ENCODE measurements at regions of chr10 and their contacts with region 1.

Region 1: DNA sequence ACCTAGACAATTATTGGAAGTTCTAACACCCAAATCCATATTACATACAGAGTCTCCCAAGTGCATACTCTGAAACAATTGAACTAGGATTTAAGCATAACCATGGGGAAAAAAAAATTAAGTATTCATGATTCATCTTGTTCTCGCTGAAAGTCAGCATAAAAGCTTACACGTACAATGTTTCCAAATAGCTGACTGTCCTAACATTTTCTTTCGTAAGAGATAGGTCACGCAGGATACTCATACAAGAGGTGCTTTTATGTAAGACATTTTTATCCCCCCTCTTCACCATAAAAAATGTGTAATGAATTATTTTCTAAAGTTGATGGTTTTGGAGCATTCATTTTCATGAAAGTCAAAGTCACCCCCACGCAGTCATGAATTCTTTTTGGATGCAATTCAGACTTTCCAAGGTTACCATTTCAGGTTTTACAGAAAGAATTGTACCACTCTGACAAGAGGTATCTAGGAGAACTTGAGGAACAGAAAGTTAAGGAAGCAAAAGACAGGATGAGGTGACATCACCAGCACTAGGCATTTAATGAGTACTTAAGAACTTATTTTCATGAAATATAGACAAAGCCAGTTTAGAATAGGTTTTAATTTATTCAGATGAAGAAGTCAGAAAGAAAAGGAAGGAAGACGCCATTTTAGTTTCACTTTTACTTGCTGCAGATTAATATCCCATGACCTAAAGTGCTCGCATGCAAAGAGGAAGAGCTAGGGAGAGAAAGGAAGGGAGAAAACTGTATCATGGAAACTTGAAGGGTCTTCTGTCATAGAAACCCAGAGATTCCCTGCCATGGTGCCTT is 55.8 kb downstream of the TMEM26 start:
- DNase-seq: no peak
- ATAC-seq: no peak
- H3K4me3 ChIP-seq: no peak overlapping the region
- H3K27ac ChIP-seq: no peak overlapping the region
- H3K4me1 ChIP-seq: peaks cover 33% of the 10 kb centered on the region
- H3K27me3 ChIP-seq: no peaks in the 10 kb centered on the region
- CTCF ChIP-seq: no peak

Region 2: GRCh38 chr10:61363006-61363405 is 34.4 kb before region 1 on chr10:
- CTCF ChIA-PET with region 1: no interaction called
- POLR2A ChIA-PET with region 1: interaction called, 3 read pairs
- intact Hi-C with region 1: loop called (anchors 5 kb)
- DNase-seq: no peak
- ATAC-seq: no peak
- H3K4me3 ChIP-seq: no peak overlapping the region
- H3K27ac ChIP-seq: no peak overlapping the region
- H3K4me1 ChIP-seq: peaks cover 13% of the 10 kb centered on the region
- H3K27me3 ChIP-seq: no peaks in the 10 kb centered on the region
- CTCF ChIP-seq: no peak

Region 3: DNA sequence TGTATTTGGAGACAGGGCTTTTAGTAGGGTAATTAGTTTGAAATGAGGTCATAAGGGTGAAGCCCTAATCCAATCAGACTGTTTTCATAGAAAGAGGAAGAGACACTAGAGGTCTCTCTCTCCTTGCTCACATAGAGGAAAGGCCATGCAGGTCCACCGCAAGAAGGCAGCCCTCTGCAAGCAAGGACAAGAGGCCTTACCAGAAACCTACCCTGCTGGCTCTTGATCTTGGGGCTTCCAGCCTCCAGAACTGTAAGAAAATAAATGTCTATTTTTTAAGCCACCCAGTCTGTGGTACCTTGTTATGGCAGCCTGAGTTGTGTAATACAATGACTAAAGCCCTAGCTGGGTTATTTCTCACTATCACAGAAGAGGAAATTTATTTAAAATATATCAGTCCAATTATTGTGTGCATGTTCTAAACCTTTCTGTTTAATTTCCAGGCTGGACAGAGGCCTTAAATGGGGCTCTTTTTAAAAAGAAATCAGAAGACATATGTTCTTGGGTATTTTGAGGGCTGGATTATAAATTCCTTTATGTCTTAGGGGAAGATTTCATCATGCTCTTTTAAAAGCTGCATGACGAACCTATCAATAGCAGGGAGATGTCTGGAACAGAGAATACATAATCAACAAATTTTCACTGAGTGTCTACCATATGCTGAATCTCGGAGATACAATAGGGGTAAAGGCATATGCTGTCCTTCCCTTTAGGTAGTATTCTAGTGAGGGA is 68.7 kb after region 1 on chr10:
- CTCF ChIA-PET with region 1: no interaction called
- POLR2A ChIA-PET with region 1: no interaction called
- intact Hi-C with region 1: loop called (anchors 1 kb)
- DNase-seq: no peak
- ATAC-seq: no peak
- H3K4me3 ChIP-seq: no peak overlapping the region
- H3K27ac ChIP-seq: no peak overlapping the region
- H3K4me1 ChIP-seq: peaks cover 29% of the 10 kb centered on the region
- H3K27me3 ChIP-seq: no peaks in the 10 kb centered on the region
- CTCF ChIP-seq: peak; percentile 53

Measured in PC-3 (cell line).